Activated CD4-positive, alpha-beta T cell treated with anti-CD3 and anti-CD28 coated beads for 36 hours (primary cell): ENCODE measurements at regions of chr17 and their contacts with region 1.

Region 1: GRCh38 chr17:49191917-49192741 is 18.2 kb downstream of the GNGT2 start:
- DNase-seq: peak; percentile 93
- ATAC-seq: peak; percentile 31
- H3K4me3 Mint-ChIP-seq: peak overlapping the region; percentile 90
- H3K27ac Mint-ChIP-seq: peak overlapping the region; percentile 97
- H3K4me1 Mint-ChIP-seq: peaks cover 31% of the 10 kb centered on the region
- H3K27me3 Mint-ChIP-seq: no peaks in the 10 kb centered on the region

Region 2: GRCh38 chr17:48047741-48048383 is 1144.3 kb before region 1 on chr17 and contains the start of gene NFE2L1:
- CTCF ChIA-PET with region 1: no interaction called
- POLR2A ChIA-PET with region 1: no interaction called
- intact Hi-C with region 1: loop called in 1 of 2 experiments (anchors 1 kb)
- DNase-seq: peak; percentile 99
- ATAC-seq: peak; percentile 97
- H3K4me3 Mint-ChIP-seq: peak within 1 kb of the TSS; percentile 88
- H3K27ac Mint-ChIP-seq: peak within 1 kb of the TSS; percentile 96
- H3K4me1 Mint-ChIP-seq: peaks cover 45% of the 10 kb centered on the region
- H3K27me3 Mint-ChIP-seq: no peaks in the 10 kb centered on the region
- total RNA-seq, gene NFE2L1: 100 to 127 TPM

Region 3: DNA sequence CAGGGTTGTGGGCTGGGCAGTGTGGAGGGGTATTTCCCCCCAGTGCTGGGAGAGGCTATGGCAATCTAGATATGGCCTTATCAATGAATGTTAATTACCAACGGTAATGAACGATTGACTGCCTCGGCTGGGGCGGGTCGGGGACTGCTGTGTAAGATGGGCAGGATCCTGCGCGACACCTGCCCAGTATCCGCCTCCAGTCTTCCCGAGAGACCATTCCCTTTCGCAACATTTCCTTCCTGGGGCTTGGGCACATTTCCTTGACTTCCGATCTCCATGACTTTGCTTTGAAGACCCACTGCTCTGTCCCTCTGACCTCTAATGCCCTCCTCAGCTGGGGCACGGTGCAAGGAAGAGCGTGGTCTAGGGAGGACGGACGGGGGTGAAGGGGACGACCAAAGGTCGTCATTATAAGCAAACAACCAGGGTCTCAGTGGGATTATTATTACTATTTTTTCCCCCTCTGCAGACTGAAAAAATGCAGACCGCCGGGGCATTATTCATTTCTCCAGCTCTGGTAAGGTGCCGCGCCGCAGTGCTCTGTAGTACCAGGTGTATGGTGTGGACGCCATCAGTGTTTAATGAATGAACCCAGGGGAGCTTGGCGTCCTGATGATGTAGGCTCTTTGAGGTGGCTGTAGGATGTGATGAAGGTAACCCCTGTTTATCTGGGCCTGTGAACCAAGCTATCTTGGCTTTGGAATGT is 299.0 kb before region 1 on chr17:
- CTCF ChIA-PET with region 1: interaction called, 5 read pairs
- POLR2A ChIA-PET with region 1: no interaction called
- intact Hi-C with region 1: loop called in 1 of 2 experiments (anchors 1 kb)
- DNase-seq: peak; percentile 30
- ATAC-seq: no peak
- H3K4me3 Mint-ChIP-seq: peak overlapping the region; percentile 86
- H3K27ac Mint-ChIP-seq: peak overlapping the region; percentile 97
- H3K4me1 Mint-ChIP-seq: peaks cover 29% of the 10 kb centered on the region
- H3K27me3 Mint-ChIP-seq: no peaks in the 10 kb centered on the region

Region 4: GRCh38 chr17:48970224-48970623 is 221.9 kb before region 1 on chr17:
- CTCF ChIA-PET with region 1: no interaction called
- POLR2A ChIA-PET with region 1: no interaction called
- intact Hi-C with region 1: no loop called
- DNase-seq: no peak
- ATAC-seq: no peak
- H3K4me3 Mint-ChIP-seq: no peak overlapping the region
- H3K27ac Mint-ChIP-seq: no peak overlapping the region
- H3K4me1 Mint-ChIP-seq: no peaks in the 10 kb centered on the region
- H3K27me3 Mint-ChIP-seq: peaks cover 26% of the 10 kb centered on the region

Region 5: GRCh38 chr17:49210158-49211029 is 18.3 kb after region 1 on chr17 and contains the starts of genes ABI3 and GNGT2:
- CTCF ChIA-PET with region 1: interaction called, 13 read pairs
- POLR2A ChIA-PET with region 1: interaction called, 9 read pairs
- intact Hi-C with region 1: loop called (anchors 1 kb)
- DNase-seq: peak; percentile 84
- ATAC-seq: peak; percentile 92
- H3K4me3 Mint-ChIP-seq: peak within 1 kb of the TSS; percentile 86
- H3K27ac Mint-ChIP-seq: peak within 1 kb of the TSS; percentile 97
- H3K4me1 Mint-ChIP-seq: peaks cover 62% of the 10 kb centered on the region
- H3K27me3 Mint-ChIP-seq: no peaks in the 10 kb centered on the region
- total RNA-seq, gene ABI3: 27.8 to 31.1 TPM
- total RNA-seq, gene GNGT2: 27.3 to 27.7 TPM

Region 6: DNA sequence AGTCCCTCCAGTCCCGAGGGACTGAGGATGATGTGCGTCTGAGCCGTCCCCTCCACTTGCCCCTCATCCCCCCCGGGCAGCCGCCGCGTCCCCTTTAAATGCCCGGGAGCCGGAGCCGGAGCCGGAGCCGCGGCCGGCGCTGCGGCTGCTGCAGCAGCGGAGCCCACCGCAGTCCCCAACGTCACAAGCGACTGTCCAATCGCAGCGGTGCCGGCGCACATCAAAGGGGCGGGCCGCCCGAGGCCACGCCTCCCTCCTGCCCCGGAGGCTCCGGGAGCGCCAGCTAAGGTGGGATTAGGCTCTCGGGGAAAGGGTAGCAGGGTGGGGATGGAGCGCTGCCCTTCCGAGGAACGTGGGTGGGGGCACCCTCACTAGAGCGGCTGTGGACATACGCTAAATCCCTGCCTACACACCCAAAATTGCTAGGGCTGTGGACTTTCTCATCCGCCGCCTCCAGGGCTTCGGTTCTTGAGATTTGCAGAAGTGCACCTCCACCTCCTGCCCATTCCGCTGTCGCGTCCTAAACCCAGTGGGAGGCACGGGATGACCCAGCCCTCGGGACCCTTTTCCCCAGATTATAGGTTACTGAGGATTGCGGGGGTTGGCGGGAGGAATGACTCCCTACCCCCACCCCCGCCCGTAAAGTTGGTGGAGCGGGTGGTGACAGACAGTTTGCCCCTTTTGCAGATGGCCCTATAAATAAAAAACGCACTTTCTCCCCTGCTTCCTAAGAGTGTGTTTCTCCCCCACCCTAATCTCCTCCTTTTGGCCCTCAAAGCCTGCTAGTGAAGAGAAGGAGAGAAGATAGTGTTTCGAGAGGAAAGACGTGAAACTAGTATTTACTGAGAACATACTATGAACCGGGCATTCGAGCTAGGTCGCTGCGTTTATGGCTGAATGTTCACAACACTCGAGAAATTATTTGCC is 38.8 kb after region 1 on chr17 and contains the start of gene PHOSPHO1:
- CTCF ChIA-PET with region 1: interaction called, 36 read pairs
- POLR2A ChIA-PET with region 1: interaction called, 3 read pairs
- intact Hi-C with region 1: loop called (anchors 1 to 2 kb)
- DNase-seq: peak; percentile 91
- ATAC-seq: peak; percentile 89
- H3K4me3 Mint-ChIP-seq: peak within 1 kb of the TSS; percentile 66
- H3K27ac Mint-ChIP-seq: no peak within 1 kb of the TSS
- H3K4me1 Mint-ChIP-seq: peaks cover 6% of the 10 kb centered on the region
- H3K27me3 Mint-ChIP-seq: peaks cover 19% of the 10 kb centered on the region
- total RNA-seq, gene PHOSPHO1: not detected

Region 7: GRCh38 chr17:49361902-49362722 is 170.0 kb after region 1 on chr17 and contains the start of gene ZNF652:
- CTCF ChIA-PET with region 1: no interaction called
- POLR2A ChIA-PET with region 1: no interaction called
- intact Hi-C with region 1: loop called in 1 of 2 experiments (anchors 1 kb)
- DNase-seq: peak; percentile 93
- ATAC-seq: peak; percentile 57
- H3K4me3 Mint-ChIP-seq: peak within 1 kb of the TSS; percentile 92
- H3K27ac Mint-ChIP-seq: peak within 1 kb of the TSS; percentile 92
- H3K4me1 Mint-ChIP-seq: peaks cover 50% of the 10 kb centered on the region
- H3K27me3 Mint-ChIP-seq: peaks cover 1% of the 10 kb centered on the region
- total RNA-seq, gene ZNF652: 5.2 to 7.0 TPM

Region 8: DNA sequence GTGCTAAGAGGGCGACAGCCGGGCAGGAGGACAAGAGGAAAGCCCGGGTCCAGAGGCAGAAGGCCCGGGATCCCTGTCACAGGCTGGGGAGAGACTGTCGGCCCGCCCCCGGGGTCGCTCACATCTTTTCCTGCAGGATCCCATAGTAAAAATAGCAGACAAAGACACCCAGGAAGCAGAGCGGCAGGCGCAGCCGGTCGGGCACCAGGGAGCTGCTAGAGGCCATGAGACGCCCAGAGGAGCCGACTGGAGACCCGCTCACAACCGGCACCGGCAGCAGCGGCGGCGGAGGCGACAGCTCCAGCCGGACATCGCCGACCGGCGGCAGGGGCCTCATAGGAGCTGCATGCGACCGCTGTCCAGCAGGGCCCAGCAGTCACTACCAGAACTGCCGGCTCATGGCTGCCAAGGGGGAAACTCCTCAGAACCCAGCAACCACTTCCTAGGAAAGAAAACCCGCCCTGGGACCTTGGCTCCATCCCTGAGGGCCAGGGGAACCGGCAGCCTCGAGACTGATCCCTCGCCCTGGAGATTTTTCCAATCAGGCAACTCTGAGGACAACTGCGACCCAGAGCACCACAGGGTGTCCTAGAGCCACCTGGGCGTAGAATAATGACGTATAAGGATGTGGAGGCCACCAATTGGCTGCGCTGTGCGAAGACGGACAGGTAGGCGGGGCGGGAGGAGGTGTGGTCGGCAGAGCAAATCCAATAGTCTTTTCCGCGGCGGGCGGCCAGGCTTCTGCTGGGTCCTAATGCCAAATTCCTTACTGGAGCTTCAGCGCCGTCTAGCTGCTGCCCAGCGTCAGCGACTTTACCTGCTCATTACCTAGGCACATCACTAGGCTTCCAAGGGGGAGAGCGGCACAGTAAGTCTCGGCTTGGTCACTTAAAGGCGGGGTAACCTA is 515.7 kb after region 1 on chr17 and contains the start of gene SLC35B1:
- CTCF ChIA-PET with region 1: no interaction called
- POLR2A ChIA-PET with region 1: no interaction called
- intact Hi-C with region 1: loop called in 1 of 2 experiments (anchors 5 kb)
- DNase-seq: peak; percentile 100
- ATAC-seq: peak; percentile 97
- H3K4me3 Mint-ChIP-seq: peak within 1 kb of the TSS; percentile 93
- H3K27ac Mint-ChIP-seq: peak within 1 kb of the TSS; percentile 97
- H3K4me1 Mint-ChIP-seq: peaks cover 39% of the 10 kb centered on the region
- H3K27me3 Mint-ChIP-seq: no peaks in the 10 kb centered on the region
- total RNA-seq, gene SLC35B1: 43.9 to 59.4 TPM